K562 (cell line): ENCODE measurements at regions of chr7 and their contacts with region 1.

Region 1: GRCh38 chr7:99837649-99838361 is 10.0 kb downstream of the CYP3A43 start:
- DNase-seq: no peak
- ATAC-seq: peak; percentile 27
- H3K4me3 ChIP-seq: no peak overlapping the region
- H3K27ac ChIP-seq: no peak overlapping the region
- H3K4me1 ChIP-seq: peaks cover 4 to 49% of the 10 kb centered on the region in 2 experiments
- H3K27me3 ChIP-seq: no peaks in the 10 kb centered on the region
- CTCF ChIP-seq: peak; percentile 36 to 68 (median 45); a peak in 4 of 6 replicates
- EP300 ChIP-seq: no peak
- POLR2A ChIP-seq: no peak
- RAD21 ChIP-seq: peak; percentile 81 to 85

Region 2: DNA sequence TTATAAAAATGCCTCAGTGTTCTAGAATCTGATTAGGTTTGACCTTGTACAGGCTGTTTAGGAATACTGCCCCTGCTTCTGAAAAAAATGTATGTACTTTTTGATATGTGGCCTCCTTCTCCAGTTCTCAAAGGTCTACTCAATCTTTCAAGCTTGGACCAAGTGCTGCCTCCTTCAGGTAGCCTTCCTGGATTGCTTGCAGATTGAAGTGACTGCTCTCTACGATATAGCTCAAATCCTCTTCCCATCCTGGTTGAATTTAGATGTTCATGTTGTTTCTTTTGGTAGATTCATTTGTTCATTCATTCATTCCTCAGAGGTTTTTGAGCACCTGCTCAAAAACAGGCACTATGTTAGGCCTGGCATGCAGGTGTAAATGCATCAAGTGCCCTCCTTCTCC is 1297.9 kb before region 1 on chr7:
- CTCF ChIA-PET with region 1: no interaction called
- POLR2A ChIA-PET with region 1: no interaction called
- in situ Hi-C with region 1: no loop called
- intact Hi-C with region 1: no loop called
- DNase-seq: no peak
- ATAC-seq: no peak
- H3K4me3 ChIP-seq: no peak overlapping the region
- H3K27ac ChIP-seq: no peak overlapping the region
- H3K4me1 ChIP-seq: no peaks in the 10 kb centered on the region
- H3K27me3 ChIP-seq: peaks cover 16 to 45% of the 10 kb centered on the region in 2 experiments; a peak in 4 of 5 replicates
- CTCF ChIP-seq: no peak
- EP300 ChIP-seq: no peak
- POLR2A ChIP-seq: no peak
- RAD21 ChIP-seq: no peak

Region 3: GRCh38 chr7:99631295-99632109 is 206.3 kb before region 1 on chr7:
- CTCF ChIA-PET with region 1: interaction called, 5 read pairs
- POLR2A ChIA-PET with region 1: interaction called, 4 read pairs
- in situ Hi-C with region 1: no loop called
- intact Hi-C with region 1: loop called (anchors 1 kb)
- DNase-seq: peak; percentile 39 to 76 (median 58)
- ATAC-seq: peak; percentile 94
- H3K4me3 ChIP-seq: no peak overlapping the region
- H3K27ac ChIP-seq: no peak overlapping the region; the same call in 2 of the 3 replicates
- H3K4me1 ChIP-seq: peaks cover 0 to 4% of the 10 kb centered on the region in 2 experiments; a peak in 4 of 5 replicates
- H3K27me3 ChIP-seq: no peaks in the 10 kb centered on the region
- CTCF ChIP-seq: peak; percentile 70 to 90 (median 80)
- EP300 ChIP-seq: no peak
- POLR2A ChIP-seq: no peak
- RAD21 ChIP-seq: peak; percentile 84 to 88

Region 4: GRCh38 chr7:99665312-99666012 is 172.3 kb before region 1 on chr7:
- CTCF ChIA-PET with region 1: no interaction called
- POLR2A ChIA-PET with region 1: interaction called, 4 read pairs
- in situ Hi-C with region 1: no loop called
- intact Hi-C with region 1: loop called (anchors 1 kb)
- DNase-seq: peak; percentile 76 to 99 (median 88)
- ATAC-seq: peak; percentile 98
- H3K4me3 ChIP-seq: no peak overlapping the region
- H3K27ac ChIP-seq: peak overlapping the region; percentile 22; the same call in 1 of the 3 replicates
- H3K4me1 ChIP-seq: peaks cover 11 to 34% of the 10 kb centered on the region in 2 experiments; a peak in 4 of 5 replicates
- H3K27me3 ChIP-seq: no peaks in the 10 kb centered on the region
- CTCF ChIP-seq: peak in 2 of 3 experiments; percentile 12 to 59; a peak in 2 of 6 replicates
- EP300 ChIP-seq: peak; percentile 96
- POLR2A ChIP-seq: no peak
- RAD21 ChIP-seq: peak; percentile 29 to 72

Region 5: GRCh38 chr7:99789441-99790070 is 48.2 kb before region 1 on chr7:
- CTCF ChIA-PET with region 1: no interaction called
- POLR2A ChIA-PET with region 1: no interaction called
- in situ Hi-C with region 1: loop called (anchors 5 kb)
- intact Hi-C with region 1: loop called (anchors 5 kb)
- DNase-seq: no peak
- ATAC-seq: no peak
- H3K4me3 ChIP-seq: no peak overlapping the region
- H3K27ac ChIP-seq: no peak overlapping the region
- H3K4me1 ChIP-seq: peaks cover 0 to 3% of the 10 kb centered on the region in 2 experiments; a peak in 2 of 5 replicates
- H3K27me3 ChIP-seq: 0 out of 5 replicates have a peak, but pooled peaks cover 0 to 6% of the 10 kb centered on the region in 2 experiments
- CTCF ChIP-seq: no peak
- EP300 ChIP-seq: no peak
- POLR2A ChIP-seq: no peak
- RAD21 ChIP-seq: no peak

Region 6: DNA sequence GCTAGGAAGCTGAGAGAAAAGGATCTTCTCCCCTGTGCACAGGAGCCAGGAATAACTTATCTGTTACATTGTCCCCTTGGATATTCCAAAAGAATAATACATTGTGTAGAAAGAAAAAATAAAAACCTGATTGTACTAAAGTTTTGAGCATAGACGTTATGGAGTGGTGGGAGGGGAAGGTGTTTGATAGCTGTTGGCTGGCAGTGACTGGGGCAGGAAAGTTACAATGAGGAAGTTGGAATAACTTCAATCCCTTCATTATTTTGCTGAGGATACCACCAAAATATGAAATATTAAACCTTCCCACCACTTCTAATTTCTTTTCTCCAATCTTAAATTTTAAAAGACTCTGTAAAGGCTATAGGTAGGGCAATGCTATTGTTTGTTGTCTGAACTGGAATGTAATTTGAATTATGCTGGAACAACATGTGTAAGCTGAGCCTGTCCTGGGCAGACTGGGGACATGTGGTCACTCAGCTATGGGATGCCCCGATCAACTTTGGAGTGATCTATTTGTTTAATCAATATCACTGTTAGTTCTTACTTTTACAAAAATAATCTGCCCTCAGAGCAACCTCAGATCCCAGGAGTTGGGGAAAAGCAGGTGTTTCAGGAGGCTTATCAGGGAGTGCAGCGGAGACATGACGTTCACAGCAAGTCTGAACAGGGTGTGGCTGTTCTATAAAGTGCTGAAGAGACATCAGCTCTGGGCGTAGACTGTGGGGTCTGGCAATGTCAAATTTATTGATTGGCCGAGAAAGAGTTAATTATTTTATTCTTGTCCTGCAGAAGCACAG is 10.8 kb after region 1 on chr7:
- CTCF ChIA-PET with region 1: no interaction called
- POLR2A ChIA-PET with region 1: interaction called, 15 read pairs
- in situ Hi-C with region 1: no loop called
- intact Hi-C with region 1: no loop called
- DNase-seq: peak; percentile 37 to 54 (median 47)
- ATAC-seq: peak; percentile 90
- H3K4me3 ChIP-seq: no peak overlapping the region
- H3K27ac ChIP-seq: no peak overlapping the region
- H3K4me1 ChIP-seq: peaks cover 0 to 14% of the 10 kb centered on the region in 2 experiments; a peak in 2 of 5 replicates
- H3K27me3 ChIP-seq: no peaks in the 10 kb centered on the region; a peak in 1 of 5 replicates
- CTCF ChIP-seq: no peak
- EP300 ChIP-seq: no peak
- POLR2A ChIP-seq: no peak
- RAD21 ChIP-seq: no peak